Activated T-helper 1 cell treated with anti-CD3 and anti-CD28 coated beads, Interleukin-12 subunit alpha, Interleukin-12 subunit beta, Interleukin-2, Interleukin-4 antibody, amounts not matched to agents 30 ng/mL and 10 ng/mL and 1 ng/mL, durations not matched to agents 14 hours and 24 hours and 36 hours (primary cell): ENCODE measurements at regions of chr3 and their contacts with region 1.

Region 1: GRCh38 chr3:190566043-190566933 is 52.4 kb downstream of the IL1RAP start:
- DNase-seq: peak; percentile 67
- H3K4me3 Mint-ChIP-seq: peak overlapping the region; percentile 42
- H3K27ac Mint-ChIP-seq: peak overlapping the region; percentile 97
- H3K4me1 Mint-ChIP-seq: peaks cover 83% of the 10 kb centered on the region
- H3K27me3 Mint-ChIP-seq: no peaks in the 10 kb centered on the region

Region 2: DNA sequence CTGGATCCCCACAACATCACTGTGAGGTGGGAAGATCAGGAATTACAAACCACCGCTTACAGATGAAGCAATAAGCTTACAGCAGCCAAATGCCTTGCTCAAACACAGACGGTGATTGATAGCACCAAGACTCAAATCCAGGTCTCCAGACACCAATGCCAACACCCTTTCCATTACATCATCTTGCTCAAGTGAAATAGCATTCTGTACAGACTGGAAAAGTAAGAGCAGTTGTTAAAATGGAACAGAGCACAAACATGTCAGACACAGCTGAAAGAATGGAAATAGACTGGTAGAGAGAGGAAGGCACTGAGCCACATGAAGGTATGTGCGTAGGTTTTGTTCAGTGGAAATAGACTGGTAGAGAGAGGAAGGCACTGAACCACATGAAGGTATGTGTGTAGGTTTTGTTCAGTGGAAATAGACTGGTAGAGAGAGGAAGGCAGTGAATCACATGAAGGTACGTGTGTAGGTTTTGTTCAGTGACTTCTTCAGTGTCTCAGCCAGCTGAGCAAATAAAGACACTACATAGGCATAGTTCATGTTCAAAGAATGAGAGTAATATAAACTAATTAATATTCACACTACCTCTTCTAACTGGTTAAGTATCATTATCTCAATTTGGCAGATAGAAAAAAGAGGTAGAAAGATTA is 259.6 kb before region 1 on chr3:
- intact Hi-C with region 1: loop called (anchors 2 kb)
- DNase-seq: no peak
- H3K4me3 Mint-ChIP-seq: no peak overlapping the region
- H3K27ac Mint-ChIP-seq: peak overlapping the region; percentile 54
- H3K4me1 Mint-ChIP-seq: peaks cover 21% of the 10 kb centered on the region
- H3K27me3 Mint-ChIP-seq: no peaks in the 10 kb centered on the region

Region 3: GRCh38 chr3:190513409-190514162 is 52.7 kb before region 1 on chr3 and contains the start of gene IL1RAP:
- intact Hi-C with region 1: loop called (anchors 1 kb)
- DNase-seq: peak; percentile 88
- H3K4me3 Mint-ChIP-seq: peak within 1 kb of the TSS; percentile 89
- H3K27ac Mint-ChIP-seq: peak within 1 kb of the TSS; percentile 98
- H3K4me1 Mint-ChIP-seq: peaks cover 49% of the 10 kb centered on the region
- H3K27me3 Mint-ChIP-seq: peaks cover 3% of the 10 kb centered on the region
- total RNA-seq, gene IL1RAP: 26.4 and 31.6 TPM in 2 replicates

Region 4: GRCh38 chr3:190585805-190586630 is 19.7 kb after region 1 on chr3:
- intact Hi-C with region 1: loop called (anchors 1 kb)
- DNase-seq: peak; percentile 49
- H3K4me3 Mint-ChIP-seq: peak overlapping the region; percentile 72
- H3K27ac Mint-ChIP-seq: peak overlapping the region; percentile 97
- H3K4me1 Mint-ChIP-seq: peaks cover 46% of the 10 kb centered on the region
- H3K27me3 Mint-ChIP-seq: no peaks in the 10 kb centered on the region